ENCODE measurements at regions of chr20 and their contacts with region 1.

Region 1: GRCh38 chr20:51326201-51326819 is 216.2 kb downstream of the NFATC2 start:
- DNase-seq: peak; percentile 51
- H3K4me3 Mint-ChIP-seq: no peak overlapping the region
- H3K27ac Mint-ChIP-seq: no peak overlapping the region
- H3K4me1 Mint-ChIP-seq: no peaks in the 10 kb centered on the region
- H3K27me3 Mint-ChIP-seq: peaks cover 2% of the 10 kb centered on the region

Region 2: GRCh38 chr20:50992733-50993457 is 333.4 kb before region 1 on chr20:
- CTCF ChIA-PET with region 1: interaction called, 80 read pairs
- POLR2A ChIA-PET with region 1: no interaction called
- intact Hi-C with region 1: no loop called
- DNase-seq: peak; percentile 68
- H3K4me3 Mint-ChIP-seq: no peak overlapping the region
- H3K27ac Mint-ChIP-seq: no peak overlapping the region
- H3K4me1 Mint-ChIP-seq: no peaks in the 10 kb centered on the region
- H3K27me3 Mint-ChIP-seq: no peaks in the 10 kb centered on the region

Region 3: GRCh38 chr20:51184289-51184688 is 142.0 kb before region 1 on chr20:
- CTCF ChIA-PET with region 1: no interaction called
- POLR2A ChIA-PET with region 1: no interaction called
- intact Hi-C with region 1: no loop called
- DNase-seq: no peak
- H3K4me3 Mint-ChIP-seq: no peak overlapping the region
- H3K27ac Mint-ChIP-seq: no peak overlapping the region
- H3K4me1 Mint-ChIP-seq: no peaks in the 10 kb centered on the region
- H3K27me3 Mint-ChIP-seq: peaks cover 14% of the 10 kb centered on the region